HEK293T (cell line): ENCODE measurements at regions of chr5 and their contacts with region 1.

Region 1: DNA sequence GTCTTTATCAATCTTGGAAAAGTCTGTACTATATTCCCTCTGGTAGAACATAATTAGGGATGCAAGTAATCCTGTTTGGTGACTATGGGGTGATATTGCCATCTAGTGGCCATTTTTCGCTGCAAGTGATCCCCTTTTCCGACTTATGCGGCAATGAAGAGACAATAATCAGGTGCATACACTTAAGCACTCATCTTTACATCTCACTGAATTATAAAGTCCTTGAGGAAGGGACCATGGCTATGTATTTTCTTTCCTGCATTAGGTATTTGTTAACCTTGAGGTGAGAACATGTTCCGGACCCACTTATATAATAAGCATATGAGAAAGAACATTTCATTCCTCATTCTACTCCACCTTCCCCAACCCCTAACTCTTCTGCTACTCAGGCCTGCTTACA is 19.6 kb upstream of the LIX1 start:
- DNase-seq: peak; percentile 52

Region 2: GRCh38 chr5:96868603-96869371 is 293.3 kb before region 1 on chr5:
- CTCF ChIA-PET with region 1: interaction called, 13 read pairs
- POLR2A ChIA-PET with region 1: no interaction called
- DNase-seq: peak; percentile 70

Region 3: DNA sequence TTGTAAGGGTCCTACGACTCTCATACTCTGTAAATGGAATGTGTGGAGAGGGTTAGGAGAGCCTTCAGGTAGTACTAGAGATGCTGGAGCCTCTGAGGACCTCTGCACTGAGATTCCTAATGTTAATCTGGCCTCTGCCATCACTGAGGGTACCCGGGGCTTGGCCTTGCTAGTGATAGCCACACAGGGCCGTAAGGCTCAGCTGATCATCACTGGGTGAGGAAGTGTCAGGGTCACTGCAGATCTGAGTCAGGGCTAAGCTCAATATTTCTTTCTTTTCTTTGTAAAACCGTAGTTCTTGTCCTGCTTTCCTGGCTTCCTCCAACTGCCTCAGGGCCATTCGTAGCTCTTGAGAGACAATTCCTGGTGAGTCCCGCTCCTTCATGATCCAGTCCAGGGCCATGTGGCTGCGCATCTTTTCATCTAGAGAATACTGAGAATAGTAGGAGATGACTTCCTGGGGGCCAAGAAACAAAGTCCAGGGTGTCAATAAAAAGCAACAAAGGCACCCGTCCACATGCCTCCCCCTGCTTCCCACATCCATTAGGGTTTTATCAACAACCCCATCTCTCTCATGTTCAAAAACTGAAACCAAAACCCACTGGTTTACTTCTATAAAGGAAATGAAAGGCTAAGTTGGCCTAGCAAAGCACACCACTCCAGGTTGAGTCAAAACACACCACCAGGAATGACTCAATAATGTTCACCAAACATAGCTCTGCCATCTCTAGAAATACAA is 67.3 kb before region 1 on chr5:
- CTCF ChIA-PET with region 1: no interaction called
- POLR2A ChIA-PET with region 1: no interaction called
- DNase-seq: no peak

Region 4: GRCh38 chr5:97183100-97183929 is 21.3 kb after region 1 on chr5 and contains the start of gene RIOK2:
- CTCF ChIA-PET with region 1: no interaction called
- POLR2A ChIA-PET with region 1: no interaction called
- DNase-seq: peak; percentile 89

Region 5: DNA sequence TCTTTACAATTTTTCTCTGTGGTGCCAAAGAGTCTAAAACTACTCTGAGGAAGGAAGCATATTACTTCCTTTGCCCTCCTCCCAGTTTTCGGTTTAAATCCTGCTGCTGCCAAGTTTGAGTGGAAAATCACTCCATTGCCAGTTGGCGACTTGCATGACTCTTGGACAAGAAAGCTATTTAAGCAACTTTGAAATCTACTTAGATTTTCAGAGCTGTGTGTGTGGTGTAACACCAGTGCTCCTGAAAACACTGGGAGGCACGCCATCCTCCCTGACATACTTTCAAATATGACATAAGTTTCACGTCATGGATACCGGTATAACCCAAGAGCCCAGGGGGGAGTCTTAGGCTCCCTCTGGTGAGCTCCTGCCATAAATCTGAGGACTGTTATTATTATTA is 104.5 kb after region 1 on chr5:
- CTCF ChIA-PET with region 1: no interaction called
- POLR2A ChIA-PET with region 1: no interaction called
- DNase-seq: no peak